CD4-positive, alpha-beta T cell (primary cell): ENCODE measurements at regions of chr2 and their contacts with region 1.

Region 1: GRCh38 chr2:1550658-1551316 is 137.5 kb downstream of the TPO start:
- DNase-seq: peak; percentile 33 to 77 (median 56)
- ATAC-seq: peak; percentile 73
- H3K4me3 ChIP-seq: no peak overlapping the region
- H3K4me3 Mint-ChIP-seq: no peak overlapping the region
- H3K27ac ChIP-seq: no peak overlapping the region
- H3K27ac Mint-ChIP-seq: no peak overlapping the region
- H3K4me1 ChIP-seq: peaks cover 18% of the 10 kb centered on the region
- H3K4me1 Mint-ChIP-seq: peaks cover 7% of the 10 kb centered on the region
- H3K27me3 ChIP-seq: no peaks in the 10 kb centered on the region
- H3K27me3 Mint-ChIP-seq: peaks cover 7% of the 10 kb centered on the region
- CTCF ChIP-seq: peak; percentile 98

Region 2: GRCh38 chr2:246489-247144 is 1304.2 kb before region 1 on chr2:
- CTCF ChIA-PET with region 1: no interaction called
- POLR2A ChIA-PET with region 1: no interaction called
- intact Hi-C with region 1: loop called in 1 of 2 experiments (anchors 10 kb)
- DNase-seq: peak in 9 of 14 experiments; percentile 5 to 75 (median 14)
- ATAC-seq: peak; percentile 60
- H3K4me3 ChIP-seq: no peak overlapping the region
- H3K4me3 Mint-ChIP-seq: no peak overlapping the region
- H3K27ac ChIP-seq: no peak overlapping the region
- H3K27ac Mint-ChIP-seq: no peak overlapping the region
- H3K4me1 ChIP-seq: no peaks in the 10 kb centered on the region
- H3K4me1 Mint-ChIP-seq: peaks cover 7% of the 10 kb centered on the region
- H3K27me3 ChIP-seq: no peaks in the 10 kb centered on the region
- H3K27me3 Mint-ChIP-seq: no peaks in the 10 kb centered on the region
- CTCF ChIP-seq: peak; percentile 79

Region 3: GRCh38 chr2:529425-529824 is 1021.4 kb before region 1 on chr2:
- CTCF ChIA-PET with region 1: no interaction called
- POLR2A ChIA-PET with region 1: no interaction called
- intact Hi-C with region 1: loop called in 1 of 2 experiments (anchors 5 kb)
- DNase-seq: peak in 3 of 14 experiments; percentile 38 to 48 (median 46)
- ATAC-seq: peak; percentile 26
- H3K4me3 ChIP-seq: no peak overlapping the region
- H3K4me3 Mint-ChIP-seq: no peak overlapping the region
- H3K27ac ChIP-seq: no peak overlapping the region
- H3K27ac Mint-ChIP-seq: no peak overlapping the region
- H3K4me1 ChIP-seq: no peaks in the 10 kb centered on the region
- H3K4me1 Mint-ChIP-seq: no peaks in the 10 kb centered on the region
- H3K27me3 ChIP-seq: peaks cover 3 to 6% of the 10 kb centered on the region in 2 experiments
- H3K27me3 Mint-ChIP-seq: peaks cover 14% of the 10 kb centered on the region
- CTCF ChIP-seq: peak; percentile 41

Region 4: DNA sequence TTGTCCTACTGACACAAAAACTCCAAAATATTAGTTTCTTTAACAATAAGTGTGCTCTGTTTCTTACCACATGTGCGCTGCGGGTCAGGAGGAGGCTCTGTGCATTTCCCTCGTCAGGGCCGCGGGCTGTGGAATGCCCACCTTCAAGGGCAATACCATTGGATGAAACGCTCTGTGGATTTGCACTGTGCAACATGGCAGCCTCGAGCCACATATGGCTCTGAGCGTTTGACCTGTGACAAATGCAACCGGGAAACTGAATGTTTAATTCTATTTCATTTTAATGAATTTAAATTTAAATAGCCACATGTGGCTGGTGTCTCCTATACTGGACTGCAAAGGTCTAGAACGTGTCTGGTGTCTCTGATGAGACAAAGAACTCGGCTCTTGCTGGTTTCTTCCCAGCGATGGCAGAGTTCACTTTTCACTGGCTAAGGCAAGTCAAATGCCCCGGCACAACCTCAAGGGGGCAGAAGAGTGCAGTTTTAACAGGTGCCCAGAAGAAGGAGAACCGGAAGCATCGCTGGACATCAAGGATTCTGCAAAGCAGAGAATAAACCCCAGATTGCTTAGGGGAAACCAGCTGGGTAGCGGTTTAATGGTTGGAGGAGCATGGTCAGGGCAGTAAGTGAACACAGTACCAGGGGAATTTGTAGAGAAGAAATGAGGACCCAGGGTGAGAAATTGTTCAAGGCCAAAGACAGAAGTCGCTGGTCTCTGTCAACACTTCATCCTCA is 836.6 kb before region 1 on chr2:
- CTCF ChIA-PET with region 1: no interaction called
- POLR2A ChIA-PET with region 1: no interaction called
- intact Hi-C with region 1: loop called (anchors 2 kb)
- DNase-seq: peak in 5 of 14 experiments; percentile 4 to 54 (median 23)
- ATAC-seq: no peak
- H3K4me3 ChIP-seq: no peak overlapping the region
- H3K4me3 Mint-ChIP-seq: no peak overlapping the region
- H3K27ac ChIP-seq: no peak overlapping the region
- H3K27ac Mint-ChIP-seq: no peak overlapping the region
- H3K4me1 ChIP-seq: peaks cover 4% of the 10 kb centered on the region
- H3K4me1 Mint-ChIP-seq: no peaks in the 10 kb centered on the region
- H3K27me3 ChIP-seq: peaks cover 0 to 29% of the 10 kb centered on the region in 2 experiments
- H3K27me3 Mint-ChIP-seq: peaks cover 54% of the 10 kb centered on the region
- CTCF ChIP-seq: no peak

Region 5: DNA sequence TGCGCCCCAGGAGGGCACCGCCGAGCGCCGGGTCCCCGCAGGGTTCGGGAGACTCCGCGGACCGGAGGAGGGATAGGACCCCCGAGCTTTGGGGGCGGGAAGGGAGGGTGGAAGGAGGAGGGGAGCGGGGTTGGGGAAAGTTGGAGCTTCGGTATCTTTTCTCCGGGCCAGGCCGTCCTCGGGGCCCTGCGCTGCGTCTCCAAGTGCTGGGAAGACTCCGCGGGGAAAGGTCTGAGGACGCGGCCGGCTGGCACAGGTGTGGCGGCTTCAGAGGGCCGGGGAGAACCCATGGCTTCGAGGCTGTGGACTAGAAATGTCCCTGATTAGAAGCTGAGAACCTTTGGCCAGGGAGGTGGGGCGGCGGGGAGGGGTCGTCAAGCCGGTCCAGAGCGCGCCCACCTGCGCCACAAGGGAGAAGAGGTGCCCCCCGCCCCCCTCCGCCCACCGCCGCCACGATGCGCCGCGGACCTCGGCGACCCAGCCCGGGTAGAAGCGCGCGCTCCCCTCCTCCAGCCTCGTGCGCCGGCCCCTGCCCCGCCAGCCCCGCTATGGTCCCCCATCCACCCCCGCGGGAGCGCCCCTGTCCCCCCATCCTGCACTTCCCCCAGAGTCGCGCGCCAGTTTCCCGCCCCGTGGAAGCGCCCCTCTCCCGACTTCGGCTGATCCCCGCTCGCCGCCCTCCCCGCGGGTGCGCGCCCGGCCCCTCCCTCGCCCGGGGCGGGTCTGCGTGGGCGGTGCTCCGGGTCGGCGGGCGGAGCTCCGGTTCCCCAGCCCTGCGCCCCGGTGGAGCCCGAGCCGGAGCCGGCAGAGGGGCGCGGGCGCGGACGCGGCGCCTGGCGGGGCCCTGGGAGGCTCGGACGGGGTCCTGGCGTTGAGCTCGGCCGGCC is 600.5 kb before region 1 on chr2 and contains the start of gene SNTG2:
- CTCF ChIA-PET with region 1: no interaction called
- POLR2A ChIA-PET with region 1: no interaction called
- intact Hi-C with region 1: loop called in 1 of 2 experiments (anchors 5 kb)
- DNase-seq: peak in 12 of 14 experiments; percentile 15 to 71 (median 42)
- ATAC-seq: peak; percentile 82
- H3K4me3 ChIP-seq: peak within 1 kb of the TSS; percentile 51
- H3K4me3 Mint-ChIP-seq: peak within 1 kb of the TSS; percentile 78
- H3K27ac ChIP-seq: no peak within 1 kb of the TSS
- H3K27ac Mint-ChIP-seq: no peak within 1 kb of the TSS
- H3K4me1 ChIP-seq: peaks cover 22% of the 10 kb centered on the region
- H3K4me1 Mint-ChIP-seq: peaks cover 7% of the 10 kb centered on the region
- H3K27me3 ChIP-seq: peaks cover 20 to 33% of the 10 kb centered on the region in 2 experiments
- H3K27me3 Mint-ChIP-seq: peaks cover 65% of the 10 kb centered on the region
- CTCF ChIP-seq: no peak
- total RNA-seq, gene SNTG2: 1.1 to 1.5 TPM

Region 6: GRCh38 chr2:1091895-1092585 is 458.7 kb before region 1 on chr2:
- CTCF ChIA-PET with region 1: no interaction called
- POLR2A ChIA-PET with region 1: no interaction called
- intact Hi-C with region 1: no loop called
- DNase-seq: no peak
- ATAC-seq: no peak
- H3K4me3 ChIP-seq: no peak overlapping the region
- H3K4me3 Mint-ChIP-seq: no peak overlapping the region
- H3K27ac ChIP-seq: no peak overlapping the region
- H3K27ac Mint-ChIP-seq: no peak overlapping the region
- H3K4me1 ChIP-seq: peaks cover 8% of the 10 kb centered on the region
- H3K4me1 Mint-ChIP-seq: peaks cover 9% of the 10 kb centered on the region
- H3K27me3 ChIP-seq: no peaks in the 10 kb centered on the region
- H3K27me3 Mint-ChIP-seq: no peaks in the 10 kb centered on the region
- CTCF ChIP-seq: no peak

Region 7: DNA sequence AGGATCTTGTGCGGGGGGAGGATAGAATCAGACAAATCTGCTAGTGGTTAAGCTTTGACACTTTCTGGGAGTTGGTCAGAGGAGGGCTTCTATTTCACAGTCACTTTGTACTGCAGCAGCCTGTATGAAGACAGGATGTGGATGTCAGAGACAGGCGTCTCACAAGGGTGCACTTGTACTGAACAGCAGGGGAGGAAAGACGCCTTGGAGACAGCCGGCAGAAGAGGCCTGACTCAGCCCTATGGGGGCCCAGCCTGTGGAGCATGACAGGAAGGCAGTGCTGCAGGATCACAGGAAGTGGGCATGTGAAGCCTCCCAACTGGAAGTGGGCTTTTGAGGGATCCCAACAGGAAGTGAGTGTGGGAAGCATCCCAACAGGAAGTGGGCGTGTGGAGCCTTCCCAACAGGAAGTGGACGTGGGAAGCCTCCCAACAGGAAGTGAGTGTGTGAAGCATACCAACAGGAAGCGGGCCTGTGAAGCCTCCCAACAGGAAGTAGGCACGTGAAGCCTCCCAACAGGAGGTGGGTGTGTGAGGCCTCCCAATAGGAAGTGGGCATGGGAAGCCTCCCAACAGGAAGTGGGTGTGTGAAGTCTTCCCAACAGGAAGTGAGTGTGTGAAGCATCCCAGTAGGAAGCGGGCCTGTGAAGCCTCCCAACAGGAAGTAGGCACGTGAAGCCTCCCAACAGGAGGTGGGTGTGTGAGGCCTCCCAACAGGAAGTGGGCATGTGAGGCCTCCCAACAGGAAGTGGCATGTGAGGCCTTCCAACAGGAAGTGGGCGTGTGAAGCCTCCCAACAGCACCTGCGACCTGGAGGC is 387.8 kb before region 1 on chr2:
- CTCF ChIA-PET with region 1: no interaction called
- POLR2A ChIA-PET with region 1: no interaction called
- intact Hi-C with region 1: loop called in 1 of 2 experiments (anchors 10 kb)
- DNase-seq: peak in 12 of 14 experiments; percentile 11 to 66 (median 47)
- ATAC-seq: peak; percentile 95
- H3K4me3 ChIP-seq: no peak overlapping the region
- H3K4me3 Mint-ChIP-seq: peak overlapping the region; percentile 66
- H3K27ac ChIP-seq: peak overlapping the region; percentile 57 to 85
- H3K27ac Mint-ChIP-seq: peak overlapping the region; percentile 86
- H3K4me1 ChIP-seq: peaks cover 40% of the 10 kb centered on the region
- H3K4me1 Mint-ChIP-seq: peaks cover 45% of the 10 kb centered on the region
- H3K27me3 ChIP-seq: no peaks in the 10 kb centered on the region
- H3K27me3 Mint-ChIP-seq: no peaks in the 10 kb centered on the region
- CTCF ChIP-seq: no peak

Region 8: DNA sequence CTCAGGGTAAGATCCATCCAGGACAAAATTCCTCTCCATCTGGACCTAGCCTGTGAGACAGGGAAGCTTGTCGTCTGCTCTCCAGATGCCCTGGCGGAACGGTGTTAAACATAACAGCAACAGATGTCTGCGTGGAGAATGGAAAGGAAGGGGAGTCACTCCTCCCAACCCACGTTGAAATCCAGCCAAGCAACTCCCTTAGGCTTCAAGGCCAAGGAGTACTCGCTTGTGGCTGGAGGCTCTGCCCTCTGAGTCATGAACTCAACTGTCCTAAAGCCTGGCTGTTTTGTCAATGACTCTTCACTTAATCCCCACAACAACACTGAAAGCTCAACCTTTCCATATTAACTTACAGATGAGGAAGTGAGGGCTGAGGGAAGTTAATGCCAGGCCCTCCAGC is 95.3 kb before region 1 on chr2:
- CTCF ChIA-PET with region 1: no interaction called
- POLR2A ChIA-PET with region 1: no interaction called
- intact Hi-C with region 1: no loop called
- DNase-seq: no peak
- ATAC-seq: no peak
- H3K4me3 ChIP-seq: no peak overlapping the region
- H3K4me3 Mint-ChIP-seq: no peak overlapping the region
- H3K27ac ChIP-seq: no peak overlapping the region
- H3K27ac Mint-ChIP-seq: no peak overlapping the region
- H3K4me1 ChIP-seq: no peaks in the 10 kb centered on the region
- H3K4me1 Mint-ChIP-seq: no peaks in the 10 kb centered on the region
- H3K27me3 ChIP-seq: no peaks in the 10 kb centered on the region
- H3K27me3 Mint-ChIP-seq: peaks cover 7% of the 10 kb centered on the region
- CTCF ChIP-seq: no peak

Region 9: GRCh38 chr2:1527153-1527992 is 23.4 kb before region 1 on chr2:
- CTCF ChIA-PET with region 1: no interaction called
- POLR2A ChIA-PET with region 1: no interaction called
- intact Hi-C with region 1: loop called in 1 of 2 experiments (anchors 2 kb)
- DNase-seq: no peak
- ATAC-seq: no peak
- H3K4me3 ChIP-seq: no peak overlapping the region
- H3K4me3 Mint-ChIP-seq: no peak overlapping the region
- H3K27ac ChIP-seq: no peak overlapping the region
- H3K27ac Mint-ChIP-seq: no peak overlapping the region
- H3K4me1 ChIP-seq: no peaks in the 10 kb centered on the region
- H3K4me1 Mint-ChIP-seq: no peaks in the 10 kb centered on the region
- H3K27me3 ChIP-seq: no peaks in the 10 kb centered on the region
- H3K27me3 Mint-ChIP-seq: no peaks in the 10 kb centered on the region
- CTCF ChIP-seq: no peak

Region 10: GRCh38 chr2:1652034-1652790 is 101.4 kb after region 1 on chr2:
- CTCF ChIA-PET with region 1: no interaction called
- POLR2A ChIA-PET with region 1: no interaction called
- intact Hi-C with region 1: no loop called
- DNase-seq: no peak
- ATAC-seq: no peak
- H3K4me3 ChIP-seq: no peak overlapping the region
- H3K4me3 Mint-ChIP-seq: no peak overlapping the region
- H3K27ac ChIP-seq: no peak overlapping the region
- H3K27ac Mint-ChIP-seq: no peak overlapping the region
- H3K4me1 ChIP-seq: no peaks in the 10 kb centered on the region
- H3K4me1 Mint-ChIP-seq: no peaks in the 10 kb centered on the region
- H3K27me3 ChIP-seq: peaks cover 0 to 4% of the 10 kb centered on the region in 2 experiments
- H3K27me3 Mint-ChIP-seq: peaks cover 3% of the 10 kb centered on the region
- CTCF ChIP-seq: no peak